ENCODE measurements at regions of chr22 and their contacts with region 1.

Region 1: GRCh38 chr22:50341977-50342650 is 1.0 kb upstream of the PPP6R2 start:
- DNase-seq: peak; percentile 90 to 94 (median 91)
- ATAC-seq: peak; percentile 87
- H3K4me3 ChIP-seq: no peak overlapping the region
- H3K4me1 ChIP-seq: peaks cover 9% of the 10 kb centered on the region
- CTCF ChIP-seq: peak; percentile 92

Region 2: DNA sequence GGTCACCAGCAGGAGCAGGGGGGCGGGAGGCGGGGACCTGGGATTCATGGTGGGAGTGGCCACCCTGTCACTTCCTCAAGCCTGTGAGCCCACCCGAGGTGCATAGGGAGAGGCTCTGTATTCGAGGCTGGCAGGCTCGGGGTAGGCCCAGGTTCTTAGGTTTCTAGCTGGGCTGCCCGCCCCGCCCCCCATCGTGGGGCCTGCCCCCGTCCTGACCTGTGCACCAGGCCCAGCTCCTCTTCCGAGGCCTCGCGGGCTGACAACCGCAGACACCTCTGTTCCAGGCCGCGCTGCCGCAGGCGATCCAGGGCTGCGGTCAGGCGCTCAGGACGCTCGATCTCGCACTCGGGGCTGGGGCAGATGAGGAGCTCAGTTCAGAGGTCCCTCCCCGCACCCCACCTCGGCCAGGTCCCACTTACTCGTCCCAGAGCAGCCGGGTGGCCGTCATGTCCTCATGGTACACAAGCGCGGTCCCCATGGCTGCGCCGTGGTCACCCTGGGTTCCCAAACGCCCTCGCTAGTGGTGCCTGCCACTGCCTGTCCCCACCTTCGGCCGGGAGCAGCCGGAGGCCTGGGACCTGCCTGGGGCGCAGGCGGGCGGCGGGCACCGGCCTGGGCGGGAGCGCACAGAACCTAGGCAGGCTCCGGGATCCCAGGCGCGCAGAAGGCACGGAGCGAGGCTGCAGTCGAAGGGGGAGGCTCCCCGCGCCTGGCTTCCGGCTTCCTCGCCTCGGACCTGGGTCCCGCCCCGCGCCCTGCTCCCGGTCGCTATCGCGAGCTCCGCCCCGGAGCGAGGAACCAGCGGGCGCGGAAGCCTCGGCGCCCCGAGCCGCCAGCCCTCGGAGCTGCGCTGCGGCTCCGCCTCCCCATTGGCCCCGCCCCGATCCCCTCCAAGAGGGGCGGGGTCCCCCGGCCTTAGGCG is 91.3 kb before region 1 on chr22 and contains the start of gene HDAC10:
- intact Hi-C with region 1: loop called in 1 of 2 experiments (anchors 5 kb)
- DNase-seq: peak; percentile 89 to 93 (median 92)
- ATAC-seq: peak; percentile 88
- H3K4me3 ChIP-seq: peak within 1 kb of the TSS; percentile 46
- H3K4me1 ChIP-seq: peaks cover 30% of the 10 kb centered on the region
- CTCF ChIP-seq: no peak
- total RNA-seq, gene HDAC10: 39.5 to 66.3 (median 47.8) TPM

Region 3: GRCh38 chr22:50282361-50282760 is 59.8 kb before region 1 on chr22:
- intact Hi-C with region 1: no loop called
- DNase-seq: no peak
- ATAC-seq: peak; percentile 71
- H3K4me3 ChIP-seq: no peak overlapping the region
- H3K4me1 ChIP-seq: no peaks in the 10 kb centered on the region
- CTCF ChIP-seq: no peak

Measured in mucosa of descending colon (tissue), 3 donors.